ENCODE measurements at regions of chr17 and their contacts with region 1.

Region 1: DNA sequence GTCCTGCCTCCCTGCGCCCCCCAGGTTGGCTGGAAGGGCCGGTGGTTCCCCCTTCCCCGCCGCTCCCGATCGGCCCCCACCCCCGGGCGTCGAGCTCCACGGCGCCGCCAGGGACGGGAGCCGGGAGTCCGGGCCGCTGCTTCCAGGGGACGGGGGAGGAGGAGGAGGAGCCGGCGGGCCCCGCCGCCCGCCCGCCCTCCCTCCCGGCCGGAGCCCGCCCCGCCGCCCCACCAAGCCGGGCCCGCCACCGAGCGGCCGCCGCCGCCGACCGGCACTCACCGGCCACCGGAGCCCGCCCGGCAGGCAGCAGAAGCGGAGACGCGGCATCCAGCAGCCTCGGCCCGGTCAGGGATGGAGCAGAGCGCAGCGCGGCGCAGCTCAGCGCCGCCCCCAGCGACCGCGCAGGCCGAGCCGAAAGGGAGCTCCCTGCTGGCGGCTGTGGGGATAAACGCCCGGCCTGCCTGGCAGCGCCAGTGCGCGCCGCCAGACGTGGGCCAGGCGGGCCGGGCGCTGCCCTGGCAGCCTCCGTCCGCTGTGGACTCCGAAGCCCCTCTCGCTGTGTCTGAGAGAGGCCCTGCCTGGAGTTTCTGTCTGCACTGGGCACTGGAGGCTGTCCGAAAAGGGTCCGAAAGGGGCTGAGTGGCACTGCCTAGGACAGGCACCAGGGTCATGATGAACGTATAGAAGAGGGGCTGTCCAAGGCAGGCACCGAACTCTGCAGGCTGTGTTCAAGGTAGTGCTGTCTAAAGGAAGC is at the start of gene MYO18A:
- DNase-seq: peak; percentile 74
- H3K4me3 ChIP-seq: peak within 1 kb of the TSS; percentile 9 to 61 (median 42)
- H3K27ac ChIP-seq: no peak within 1 kb of the TSS
- H3K4me1 ChIP-seq: peaks cover 11% of the 10 kb centered on the region
- H3K27me3 ChIP-seq: no peaks in the 10 kb centered on the region
- CTCF ChIP-seq: peak; percentile 88 to 90
- POLR2A ChIP-seq: no peak
- total RNA-seq, gene MYO18A: 20.6 and 28.3 TPM in 2 replicates

Region 2: DNA sequence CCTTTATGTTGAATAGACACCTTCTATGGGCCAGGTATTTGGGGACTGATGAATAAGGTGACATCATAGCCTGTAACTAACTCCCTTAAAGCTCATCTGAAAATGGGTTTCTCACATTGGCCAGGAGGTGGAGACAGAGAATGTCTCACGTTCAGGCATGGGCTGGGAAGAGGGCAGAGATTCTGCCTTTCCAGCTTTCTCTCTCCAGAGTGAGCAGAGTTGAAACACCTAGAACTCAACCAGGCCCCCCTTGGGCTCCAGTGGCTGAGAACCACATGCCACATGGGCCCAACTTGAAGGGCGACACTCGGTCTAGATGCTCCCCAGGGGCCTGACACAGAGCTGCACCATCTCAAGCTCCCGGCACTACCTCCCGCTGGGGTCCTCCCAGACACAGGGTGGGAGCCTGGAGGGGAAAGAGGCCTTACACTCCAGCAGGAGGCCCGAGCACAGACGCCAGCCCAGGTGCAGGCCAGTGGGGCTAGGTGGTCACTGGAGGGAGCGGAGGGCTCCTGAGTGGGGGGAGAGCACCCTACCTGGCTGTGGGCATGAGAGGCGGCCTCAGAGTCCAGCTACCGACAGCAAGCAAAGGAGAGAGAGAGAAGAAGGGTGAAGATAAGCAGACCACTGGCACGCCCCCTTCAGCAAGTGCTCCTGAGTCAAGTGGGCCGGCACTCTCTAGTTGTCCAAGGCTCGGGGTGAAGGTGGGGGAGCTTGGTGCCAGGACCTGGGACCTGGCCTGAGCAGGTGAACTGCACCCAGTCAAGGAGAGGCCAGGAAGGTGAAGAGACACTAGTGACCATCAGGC is 55.9 kb before region 1 on chr17:
- CTCF ChIA-PET with region 1: interaction called, 53 read pairs
- POLR2A ChIA-PET with region 1: interaction called, 3 read pairs
- dilution Hi-C with region 1: no loop called
- intact Hi-C with region 1: no loop called
- DNase-seq: peak; percentile 61
- H3K4me3 ChIP-seq: no peak overlapping the region
- H3K27ac ChIP-seq: no peak overlapping the region
- H3K4me1 ChIP-seq: no peaks in the 10 kb centered on the region
- H3K27me3 ChIP-seq: no peaks in the 10 kb centered on the region
- CTCF ChIP-seq: peak; percentile 60 to 61
- POLR2A ChIP-seq: no peak

Region 3: DNA sequence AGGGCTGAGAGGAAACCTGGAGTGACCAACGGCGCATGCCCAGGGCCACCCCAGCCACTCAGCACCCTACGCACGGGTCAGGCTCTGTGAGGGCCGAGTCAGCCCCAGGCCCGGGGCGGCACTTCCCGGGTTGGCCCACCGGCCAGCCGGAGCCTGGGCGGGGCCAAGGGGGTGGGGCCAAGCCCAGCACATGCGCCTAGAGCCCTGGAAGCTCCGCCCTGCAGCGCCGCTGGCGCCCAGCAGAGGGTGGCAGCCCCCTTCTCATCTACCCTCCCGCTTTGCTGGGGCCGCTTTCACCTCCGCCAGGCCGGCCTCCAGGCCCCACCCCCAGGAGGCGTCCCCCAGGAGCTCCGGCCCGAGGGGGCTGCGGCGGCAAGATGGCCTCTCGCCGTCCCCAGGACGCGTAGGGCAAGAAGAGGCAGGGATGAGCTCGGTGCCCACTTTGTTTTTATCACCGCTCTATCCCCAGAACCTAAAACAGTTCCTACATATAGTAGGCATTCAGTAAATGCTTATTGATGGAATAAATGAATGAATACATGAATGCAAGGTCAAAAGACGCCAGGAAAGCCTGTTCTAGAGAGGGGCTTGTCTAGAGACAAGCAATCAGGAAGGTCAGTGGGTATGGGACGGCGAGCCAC is 31.3 kb before region 1 on chr17:
- CTCF ChIA-PET with region 1: interaction called, 242 read pairs
- POLR2A ChIA-PET with region 1: interaction called, 5 read pairs
- dilution Hi-C with region 1: no loop called
- intact Hi-C with region 1: loop called (anchors 1 kb)
- DNase-seq: peak; percentile 95
- H3K4me3 ChIP-seq: peak overlapping the region; percentile 28 to 74 (median 31)
- H3K27ac ChIP-seq: peak overlapping the region; percentile 53
- H3K4me1 ChIP-seq: peaks cover 18% of the 10 kb centered on the region
- H3K27me3 ChIP-seq: no peaks in the 10 kb centered on the region
- CTCF ChIP-seq: peak; percentile 96 to 97
- POLR2A ChIP-seq: peak; percentile 83

Region 4: GRCh38 chr17:29162738-29163341 is 17.4 kb before region 1 on chr17:
- CTCF ChIA-PET with region 1: interaction called, 44 read pairs
- POLR2A ChIA-PET with region 1: no interaction called
- dilution Hi-C with region 1: no loop called
- intact Hi-C with region 1: no loop called
- DNase-seq: no peak
- H3K4me3 ChIP-seq: no peak overlapping the region
- H3K27ac ChIP-seq: no peak overlapping the region
- H3K4me1 ChIP-seq: no peaks in the 10 kb centered on the region
- H3K27me3 ChIP-seq: no peaks in the 10 kb centered on the region
- CTCF ChIP-seq: no peak
- POLR2A ChIP-seq: no peak

Region 5: GRCh38 chr17:29195465-29196081 is 15.4 kb after region 1 on chr17:
- CTCF ChIA-PET with region 1: interaction called, 33 read pairs
- POLR2A ChIA-PET with region 1: no interaction called
- dilution Hi-C with region 1: no loop called
- intact Hi-C with region 1: loop called (anchors 2 kb)
- DNase-seq: no peak
- H3K4me3 ChIP-seq: no peak overlapping the region
- H3K27ac ChIP-seq: no peak overlapping the region
- H3K4me1 ChIP-seq: no peaks in the 10 kb centered on the region
- H3K27me3 ChIP-seq: peaks cover 10 to 15% of the 10 kb centered on the region in 2 experiments
- CTCF ChIP-seq: no peak
- POLR2A ChIP-seq: no peak

Region 6: DNA sequence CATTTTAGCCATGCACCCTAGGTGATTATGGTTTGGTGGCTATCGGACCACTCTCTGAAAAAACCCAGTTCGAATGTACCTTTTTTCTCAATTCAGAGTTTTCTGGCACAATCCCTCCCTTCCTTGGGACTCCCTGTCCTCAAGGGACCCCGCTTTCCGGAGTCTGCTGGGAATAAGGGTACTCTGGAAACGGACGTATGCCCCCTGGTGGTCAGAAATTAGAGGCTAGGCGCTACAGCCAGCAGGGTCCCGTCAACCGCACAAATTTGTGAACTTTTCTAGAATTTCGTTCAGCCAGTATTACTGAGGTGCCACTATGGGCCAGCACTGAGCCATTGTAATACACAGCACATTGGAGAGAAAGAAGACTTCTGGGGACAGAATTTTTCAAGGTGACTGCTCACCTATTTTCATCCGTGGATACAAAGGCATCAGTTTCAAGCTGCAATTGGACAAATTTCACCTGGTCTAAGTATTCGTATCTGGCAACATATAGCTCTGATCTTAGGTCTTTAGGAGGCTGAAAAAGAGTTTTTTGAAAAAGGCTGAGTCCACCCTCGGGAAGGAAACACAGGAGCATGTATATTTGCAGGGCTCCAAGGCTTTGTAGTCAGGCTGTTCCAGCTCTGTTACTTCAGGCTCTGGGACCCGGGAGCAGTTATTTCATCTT is 39.3 kb after region 1 on chr17:
- CTCF ChIA-PET with region 1: interaction called, 20 read pairs
- POLR2A ChIA-PET with region 1: no interaction called
- dilution Hi-C with region 1: no loop called
- intact Hi-C with region 1: loop called (anchors 1 kb)
- DNase-seq: peak; percentile 86
- H3K4me3 ChIP-seq: no peak overlapping the region
- H3K27ac ChIP-seq: no peak overlapping the region
- H3K4me1 ChIP-seq: no peaks in the 10 kb centered on the region
- H3K27me3 ChIP-seq: no peaks in the 10 kb centered on the region
- CTCF ChIP-seq: peak; percentile 86 to 94
- POLR2A ChIP-seq: no peak

Region 7: DNA sequence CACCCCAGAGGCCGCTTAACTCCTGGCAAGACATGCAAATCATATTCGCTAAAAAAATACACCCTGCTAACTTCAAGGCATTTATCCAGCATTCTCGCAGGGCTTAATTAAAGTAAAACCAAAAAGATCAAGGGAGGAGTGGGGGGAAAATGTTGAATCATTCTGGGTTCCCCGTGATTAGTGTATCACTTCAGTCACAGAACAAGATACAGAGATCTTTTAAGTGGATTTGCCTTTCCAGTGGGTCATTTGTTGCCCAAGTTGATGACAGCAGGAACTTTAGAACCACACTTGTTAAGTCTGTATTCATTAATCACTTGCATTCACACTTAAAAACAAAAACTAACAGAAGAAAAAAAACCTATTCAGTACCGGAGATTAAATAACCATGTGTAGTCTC is 83.7 kb after region 1 on chr17:
- CTCF ChIA-PET with region 1: no interaction called
- POLR2A ChIA-PET with region 1: no interaction called
- dilution Hi-C with region 1: no loop called
- intact Hi-C with region 1: no loop called
- DNase-seq: no peak
- H3K4me3 ChIP-seq: no peak overlapping the region
- H3K27ac ChIP-seq: no peak overlapping the region
- H3K4me1 ChIP-seq: no peaks in the 10 kb centered on the region
- H3K27me3 ChIP-seq: no peaks in the 10 kb centered on the region
- CTCF ChIP-seq: no peak
- POLR2A ChIP-seq: no peak

Region 8: GRCh38 chr17:29293890-29294579 is 113.8 kb after region 1 on chr17 and contains the start of gene NUFIP2:
- CTCF ChIA-PET with region 1: interaction called, 20 read pairs
- POLR2A ChIA-PET with region 1: interaction called, 4 read pairs
- dilution Hi-C with region 1: no loop called
- intact Hi-C with region 1: no loop called
- DNase-seq: peak; percentile 99
- H3K4me3 ChIP-seq: peak within 1 kb of the TSS; percentile 70 to 95 (median 78)
- H3K27ac ChIP-seq: peak within 1 kb of the TSS; percentile 82
- H3K4me1 ChIP-seq: peaks cover 30% of the 10 kb centered on the region
- H3K27me3 ChIP-seq: no peaks in the 10 kb centered on the region
- CTCF ChIP-seq: no peak
- POLR2A ChIP-seq: peak; percentile 100
- total RNA-seq, gene NUFIP2: 51.1 and 60.7 TPM in 2 replicates